ENCODE measurements at regions of chr6 and their contacts with region 1.

Region 1: GRCh38 chr6:30616811-30617564 is at the start of gene PPP1R10:
- DNase-seq: peak; percentile 100
- H3K4me3 Mint-ChIP-seq: peak within 1 kb of the TSS; percentile 90
- H3K27ac Mint-ChIP-seq: peak within 1 kb of the TSS; percentile 92
- H3K4me1 Mint-ChIP-seq: peaks cover 42% of the 10 kb centered on the region
- H3K27me3 Mint-ChIP-seq: peaks cover 6% of the 10 kb centered on the region
- total RNA-seq, gene PPP1R10: 106 and 107 TPM in 2 replicates

Region 2: DNA sequence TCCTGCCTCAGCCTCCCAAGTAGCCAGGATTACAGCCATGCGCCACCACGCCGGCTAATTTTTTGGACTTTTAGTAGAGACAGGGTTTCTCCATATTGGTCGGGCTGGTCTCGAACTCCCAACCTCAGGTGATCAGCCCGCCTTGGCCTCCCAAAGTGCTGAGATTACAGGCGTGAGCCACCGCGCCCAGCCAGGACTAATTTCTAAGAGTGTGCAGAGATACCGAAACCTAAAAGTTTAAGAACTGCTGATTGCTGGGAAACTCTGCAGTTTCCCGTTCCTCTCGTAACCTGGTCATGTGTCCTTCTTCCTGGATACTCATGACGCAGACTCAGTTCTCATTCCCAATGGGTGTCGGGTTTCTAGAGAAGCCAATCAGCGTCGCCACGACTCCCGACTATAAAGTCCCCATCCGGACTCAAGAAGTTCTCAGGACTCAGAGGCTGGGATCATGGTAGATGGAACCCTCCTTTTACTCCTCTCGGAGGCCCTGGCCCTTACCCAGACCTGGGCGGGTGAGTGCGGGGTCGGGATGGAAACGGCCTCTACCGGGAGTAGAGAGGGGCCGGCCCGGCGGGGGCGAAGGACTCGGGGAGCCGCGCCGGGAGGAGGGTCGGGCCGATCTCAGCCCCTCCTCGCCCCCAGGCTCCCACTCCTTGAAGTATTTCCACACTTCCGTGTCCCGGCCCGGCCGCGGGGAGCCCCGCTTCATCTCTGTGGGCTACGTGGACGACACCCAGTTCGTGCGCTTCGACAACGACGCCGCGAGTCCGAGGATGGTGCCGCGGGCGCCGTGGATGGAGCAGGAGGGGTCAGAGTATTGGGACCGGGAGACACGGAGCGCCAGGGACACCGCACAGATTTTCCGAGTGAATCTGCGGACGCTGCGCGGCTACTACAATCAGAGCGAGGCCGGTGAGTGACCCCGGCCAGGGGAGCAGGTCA is 127.6 kb before region 1 on chr6 and contains the start of gene HLA-E:
- intact Hi-C with region 1: loop called (anchors 1 kb)
- DNase-seq: peak; percentile 98
- H3K4me3 Mint-ChIP-seq: peak within 1 kb of the TSS; percentile 100
- H3K27ac Mint-ChIP-seq: peak within 1 kb of the TSS; percentile 97
- H3K4me1 Mint-ChIP-seq: peaks cover 52% of the 10 kb centered on the region
- H3K27me3 Mint-ChIP-seq: no peaks in the 10 kb centered on the region
- total RNA-seq, gene HLA-E: 484 and 488 TPM in 2 replicates

Region 3: DNA sequence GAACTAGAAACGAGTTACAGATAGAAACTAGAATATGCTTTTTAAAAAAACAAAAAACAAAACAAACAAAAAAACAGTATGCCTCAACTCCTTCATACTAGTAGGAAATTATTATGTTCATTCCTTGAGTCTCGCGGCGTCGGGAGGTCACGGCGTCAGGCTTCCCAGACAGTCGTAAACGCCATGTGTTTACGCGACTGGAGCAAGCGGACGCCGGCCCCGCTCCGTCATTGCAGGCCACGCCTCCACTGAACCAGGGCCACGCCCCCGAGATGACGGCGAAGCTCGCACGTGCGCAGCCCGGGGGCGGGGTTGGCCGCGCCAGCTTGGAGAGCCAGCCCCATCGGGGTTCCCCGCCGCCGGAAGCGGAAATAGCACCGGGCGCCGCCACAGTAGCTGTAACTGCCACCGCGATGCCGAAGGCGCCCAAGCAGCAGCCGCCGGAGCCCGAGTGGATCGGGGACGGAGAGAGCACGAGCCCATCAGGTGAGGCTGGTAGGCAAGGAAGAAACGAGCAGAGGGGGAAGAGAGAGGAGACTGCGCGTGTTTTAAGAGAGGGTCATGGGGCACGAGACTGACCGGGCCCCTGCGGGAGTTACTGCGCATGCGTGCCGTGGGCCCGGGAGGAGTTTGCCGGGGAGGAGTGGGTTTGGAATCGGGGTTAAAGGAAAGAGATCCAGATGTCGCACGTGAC is 45.8 kb before region 1 on chr6 and contains the start of gene ABCF1:
- intact Hi-C with region 1: loop called (anchors 1 kb)
- DNase-seq: peak; percentile 100
- H3K4me3 Mint-ChIP-seq: peak within 1 kb of the TSS; percentile 92
- H3K27ac Mint-ChIP-seq: peak within 1 kb of the TSS; percentile 99
- H3K4me1 Mint-ChIP-seq: peaks cover 59% of the 10 kb centered on the region
- H3K27me3 Mint-ChIP-seq: no peaks in the 10 kb centered on the region
- total RNA-seq, gene ABCF1: 123 and 125 TPM in 2 replicates

Region 4: DNA sequence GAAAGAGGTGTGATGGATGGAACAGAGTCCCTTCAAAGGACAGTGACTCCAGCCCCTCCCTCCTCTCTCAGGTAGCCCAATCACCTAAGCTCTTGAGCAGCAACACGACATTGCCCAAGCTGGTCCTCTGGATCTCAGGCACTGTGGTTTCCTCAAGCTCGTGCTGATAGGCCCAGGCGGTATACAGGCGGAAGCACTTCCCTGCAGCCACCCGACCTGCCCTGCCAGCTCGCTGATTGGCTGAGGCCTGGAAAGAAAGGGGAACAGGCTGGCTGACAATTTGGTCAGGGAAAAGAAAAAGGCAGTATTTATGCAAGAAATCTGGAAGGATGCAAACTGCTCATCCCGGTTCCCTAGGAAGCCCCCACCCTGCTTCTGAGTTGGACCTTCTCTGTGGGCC is 39.5 kb after region 1 on chr6:
- intact Hi-C with region 1: no loop called
- DNase-seq: no peak
- H3K4me3 Mint-ChIP-seq: no peak overlapping the region
- H3K27ac Mint-ChIP-seq: no peak overlapping the region
- H3K4me1 Mint-ChIP-seq: peaks cover 4% of the 10 kb centered on the region
- H3K27me3 Mint-ChIP-seq: no peaks in the 10 kb centered on the region

Region 5: DNA sequence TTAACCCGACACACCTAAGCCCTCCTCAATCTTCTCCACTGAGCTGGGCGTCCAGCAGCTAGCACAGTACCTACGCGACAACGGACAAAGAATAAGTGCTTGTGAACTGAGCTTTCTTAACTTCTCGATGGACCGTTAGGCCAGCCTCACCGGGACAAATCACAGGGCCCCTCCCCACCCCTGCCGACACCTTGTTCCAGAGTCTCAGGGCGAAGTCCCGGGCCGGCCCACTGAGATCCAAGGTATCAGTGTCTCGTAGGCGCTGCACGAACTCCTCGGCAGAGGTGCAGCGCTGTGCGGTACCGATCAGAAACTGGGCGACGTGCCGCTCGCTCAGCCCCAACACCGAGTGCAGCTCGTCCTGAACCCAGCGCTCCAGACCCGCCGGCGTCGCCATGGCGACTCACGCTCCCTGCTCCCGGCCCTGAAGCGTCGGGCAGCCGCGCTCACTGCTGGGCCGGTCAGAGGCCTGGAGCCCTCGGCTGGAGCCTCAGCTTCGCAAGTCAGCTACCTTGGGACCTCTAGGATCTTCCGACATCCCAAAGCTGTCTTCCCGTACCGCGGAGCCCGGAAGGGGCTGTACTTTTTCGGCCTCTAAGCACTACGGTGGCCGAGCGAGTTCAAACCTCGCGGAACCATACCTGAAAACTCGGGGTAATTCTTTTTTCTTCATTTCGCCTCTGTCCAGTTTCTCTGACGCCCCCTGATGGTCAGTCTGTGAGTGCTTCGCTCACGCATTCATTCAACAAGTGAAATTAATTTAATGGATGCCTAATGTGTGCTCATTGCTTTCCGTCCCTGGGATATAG is 55.7 kb after region 1 on chr6 and contains the start of gene DHX16:
- intact Hi-C with region 1: loop called (anchors 2 kb)
- DNase-seq: peak; percentile 97
- H3K4me3 Mint-ChIP-seq: peak within 1 kb of the TSS; percentile 80
- H3K27ac Mint-ChIP-seq: peak within 1 kb of the TSS; percentile 54
- H3K4me1 Mint-ChIP-seq: peaks cover 32% of the 10 kb centered on the region
- H3K27me3 Mint-ChIP-seq: no peaks in the 10 kb centered on the region
- total RNA-seq, gene DHX16: 53.4 and 56.7 TPM in 2 replicates

Region 6: DNA sequence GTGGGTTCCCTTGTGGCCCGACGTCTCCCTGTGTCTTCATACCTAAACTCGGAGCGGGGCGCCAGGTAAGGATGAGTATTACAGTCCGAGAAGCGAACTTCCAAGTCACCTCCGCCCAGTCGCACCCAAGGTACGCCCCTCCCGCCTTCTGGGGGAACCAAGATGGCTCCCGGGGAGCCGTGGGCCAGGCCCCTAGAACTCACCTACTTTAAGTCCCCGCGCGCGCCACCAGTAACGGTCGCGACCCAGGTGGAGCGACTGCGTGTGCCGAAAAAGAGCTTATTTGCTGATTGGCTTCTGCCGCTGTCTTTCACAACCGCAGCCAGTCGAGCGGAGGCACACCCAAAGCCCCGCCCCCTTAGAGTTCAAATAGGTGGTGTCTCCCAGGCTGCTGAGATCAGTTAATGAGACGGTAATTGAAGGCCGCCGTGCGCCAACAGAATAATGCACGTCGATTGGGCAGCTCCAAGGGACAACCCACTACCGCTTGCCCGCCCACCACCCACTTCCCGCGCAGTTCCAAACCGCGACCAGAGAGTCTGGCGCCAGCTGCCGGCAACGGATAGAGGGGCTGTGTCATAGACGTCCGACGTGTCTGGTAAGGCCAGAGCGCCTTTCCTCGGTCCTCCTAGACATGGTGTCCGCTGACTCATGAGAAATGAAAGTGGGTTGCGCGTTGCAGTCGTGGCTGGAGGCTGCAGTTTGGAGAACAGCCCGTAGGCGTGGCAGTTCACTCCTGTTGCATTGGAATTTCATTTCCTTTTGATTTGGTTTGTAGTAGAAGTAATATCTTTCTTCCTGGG is 100.3 kb after region 1 on chr6 and contains the start of gene MDC1:
- intact Hi-C with region 1: loop called (anchors 1 kb)
- DNase-seq: peak; percentile 99
- H3K4me3 Mint-ChIP-seq: peak within 1 kb of the TSS; percentile 95
- H3K27ac Mint-ChIP-seq: peak within 1 kb of the TSS; percentile 99
- H3K4me1 Mint-ChIP-seq: peaks cover 45% of the 10 kb centered on the region
- H3K27me3 Mint-ChIP-seq: no peaks in the 10 kb centered on the region
- total RNA-seq, gene MDC1: 93.9 and 97.2 TPM in 2 replicates

Region 7: DNA sequence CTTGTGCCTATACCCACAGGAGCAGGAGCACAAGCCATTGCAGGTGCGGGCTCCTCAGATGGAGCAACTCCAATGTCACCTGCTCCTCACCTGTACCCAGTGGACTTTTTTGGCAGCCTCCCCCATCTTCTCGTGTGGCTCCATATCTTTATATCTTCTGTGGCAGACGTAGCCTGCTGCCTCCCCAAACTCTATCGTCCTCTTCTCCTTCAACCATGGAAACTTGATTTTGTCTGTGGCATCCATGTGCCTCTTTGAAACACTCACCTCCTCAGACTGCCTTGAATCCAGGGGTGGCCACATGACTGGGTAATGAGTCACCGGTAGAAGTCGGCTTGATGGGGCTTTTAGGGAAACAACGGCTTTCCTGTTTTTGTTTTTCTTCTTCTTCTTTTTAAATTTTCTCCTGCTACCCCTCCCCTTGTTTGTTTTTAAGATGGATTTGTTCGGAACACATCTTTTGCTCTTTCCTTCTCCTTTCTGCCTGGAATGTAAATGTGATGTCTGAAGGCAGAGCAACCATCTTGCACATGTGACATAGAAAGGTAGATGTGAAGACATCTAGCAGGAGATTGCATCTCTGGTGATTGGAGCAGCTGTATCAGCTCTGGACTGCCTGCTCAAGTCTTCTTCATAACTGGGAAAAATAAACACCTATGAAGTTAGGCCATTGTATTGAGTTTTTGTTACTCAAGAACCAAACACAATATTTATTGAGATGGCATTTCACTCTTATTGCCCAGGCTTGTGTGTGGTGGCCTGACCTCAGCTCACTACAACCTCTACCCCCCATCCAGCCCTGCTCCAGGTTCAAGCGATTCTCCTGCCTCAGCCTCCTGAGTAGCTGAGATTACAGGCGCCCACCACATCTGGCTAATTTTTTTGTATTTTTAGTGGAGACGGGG is 197.4 kb after region 1 on chr6:
- intact Hi-C with region 1: loop called (anchors 5 kb)
- DNase-seq: peak; percentile 85
- H3K4me3 Mint-ChIP-seq: peak overlapping the region; percentile 67
- H3K27ac Mint-ChIP-seq: peak overlapping the region; percentile 98
- H3K4me1 Mint-ChIP-seq: peaks cover 75% of the 10 kb centered on the region
- H3K27me3 Mint-ChIP-seq: peaks cover 2% of the 10 kb centered on the region